K562 (cell line): ENCODE measurements at regions of chr12 and their contacts with region 1.

Region 1: GRCh38 chr12:57534991-57535543 is 11.9 kb downstream of the DCTN2 start:
- DNase-seq: no peak
- ATAC-seq: no peak
- H3K4me3 ChIP-seq: no peak overlapping the region
- H3K27ac ChIP-seq: no peak overlapping the region
- H3K4me1 ChIP-seq: peaks cover 14 to 27% of the 10 kb centered on the region in 2 experiments
- H3K27me3 ChIP-seq: no peaks in the 10 kb centered on the region
- CTCF ChIP-seq: no peak
- EP300 ChIP-seq: no peak
- POLR2A ChIP-seq: no peak
- RAD21 ChIP-seq: no peak

Region 2: DNA sequence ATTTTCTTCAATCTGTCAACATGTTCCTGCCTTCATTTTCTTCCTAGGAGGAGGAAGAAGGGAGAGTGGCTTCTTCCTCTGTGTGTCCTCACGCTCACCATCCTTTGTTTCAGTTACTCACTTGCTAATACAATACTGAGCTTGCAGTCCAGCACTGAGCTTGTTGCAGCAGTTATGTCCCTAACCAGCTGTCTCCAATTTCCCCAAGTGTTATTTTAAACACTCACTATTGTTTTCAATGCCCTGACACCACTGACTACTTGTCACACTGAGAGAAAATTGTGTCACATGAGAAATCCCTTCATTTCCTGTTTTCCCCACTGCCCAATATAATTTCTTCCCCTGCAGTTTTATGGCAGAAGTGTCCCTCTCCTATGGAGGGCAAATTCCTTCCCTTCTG is 718.6 kb before region 1 on chr12:
- CTCF ChIA-PET with region 1: no interaction called
- POLR2A ChIA-PET with region 1: no interaction called
- in situ Hi-C with region 1: no loop called
- intact Hi-C with region 1: no loop called
- DNase-seq: no peak
- ATAC-seq: no peak
- H3K4me3 ChIP-seq: no peak overlapping the region
- H3K27ac ChIP-seq: no peak overlapping the region
- H3K4me1 ChIP-seq: no peaks in the 10 kb centered on the region; a peak in 1 of 5 replicates
- H3K27me3 ChIP-seq: peaks cover 0 to 2% of the 10 kb centered on the region in 2 experiments; a peak in 1 of 5 replicates
- CTCF ChIP-seq: no peak
- EP300 ChIP-seq: no peak
- POLR2A ChIP-seq: no peak
- RAD21 ChIP-seq: no peak

Region 3: DNA sequence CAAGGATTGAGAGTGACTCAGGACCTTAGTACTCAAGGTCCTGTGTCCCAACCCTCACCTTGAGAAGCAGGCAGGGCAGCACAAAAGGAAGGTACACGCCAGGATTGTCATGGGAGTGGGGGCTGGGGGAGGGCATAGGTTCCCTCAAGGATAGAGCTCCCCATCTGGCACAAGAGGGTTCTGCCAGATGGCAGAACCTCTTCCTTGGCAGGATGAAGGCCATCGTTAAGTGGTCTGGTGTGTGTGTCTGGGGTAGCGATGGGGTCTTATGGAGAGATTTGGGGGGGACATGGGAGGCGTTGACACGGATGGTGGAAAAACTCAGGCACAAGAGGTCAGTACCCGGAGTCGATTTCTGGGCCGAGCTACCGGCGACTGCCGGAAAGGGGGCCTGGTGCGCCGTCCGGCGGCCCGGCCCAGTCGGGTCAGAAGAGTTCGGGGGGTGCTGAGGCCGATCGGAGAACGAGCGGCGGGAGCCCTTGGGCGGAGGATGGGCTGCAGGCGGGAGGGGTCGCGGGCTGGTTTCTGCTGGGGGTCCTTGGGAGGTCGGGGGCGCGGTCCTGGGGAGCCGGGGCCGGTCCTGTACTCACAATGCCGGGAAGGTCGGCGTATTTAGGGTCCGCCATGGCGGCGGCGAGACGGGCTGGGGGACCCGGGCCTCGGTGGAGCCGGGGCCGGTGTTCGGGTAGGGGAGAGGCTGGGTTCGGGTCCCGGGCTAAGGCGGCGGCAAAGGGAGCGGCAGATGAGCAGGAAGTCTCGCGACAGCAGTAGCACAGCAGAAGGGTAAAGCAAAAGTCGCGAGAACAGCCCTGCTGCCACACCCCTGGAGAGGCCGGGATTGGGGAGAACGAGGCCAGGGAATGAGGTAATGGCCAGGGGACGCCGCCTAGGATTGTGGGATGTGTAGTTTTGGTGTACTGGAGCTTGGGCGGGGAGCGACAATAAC is 11.6 kb after region 1 on chr12 and contains the start of gene DCTN2:
- CTCF ChIA-PET with region 1: interaction called, 3 read pairs
- POLR2A ChIA-PET with region 1: interaction called, 225 read pairs
- in situ Hi-C with region 1: no loop called
- intact Hi-C with region 1: no loop called
- DNase-seq: peak; percentile 93 to 98 (median 95)
- ATAC-seq: peak; percentile 87
- H3K4me3 ChIP-seq: peak within 1 kb of the TSS; percentile 93
- H3K27ac ChIP-seq: peak within 1 kb of the TSS; percentile 84
- H3K4me1 ChIP-seq: peaks cover 38 to 49% of the 10 kb centered on the region in 2 experiments
- H3K27me3 ChIP-seq: no peaks in the 10 kb centered on the region
- CTCF ChIP-seq: peak in 1 of 3 experiments; percentile 26; a peak in 2 of 6 replicates
- EP300 ChIP-seq: 0 out of 2 replicates have a peak, but pooled peaks have one; percentile 8
- POLR2A ChIP-seq: peak; percentile 79
- RAD21 ChIP-seq: no peak
- polyA plus RNA-seq, gene DCTN2: 43.6 to 64.7 TPM